A673 (cell line): ENCODE measurements at regions of chr11 and their contacts with region 1.

Region 1: GRCh38 chr11:13772223-13773046 is 104.0 kb downstream of the FAR1 start:
- DNase-seq: peak; percentile 67
- H3K4me3 ChIP-seq: no peak overlapping the region
- H3K27ac ChIP-seq: no peak overlapping the region
- H3K4me1 ChIP-seq: no peaks in the 10 kb centered on the region
- H3K27me3 ChIP-seq: peaks cover 13% of the 10 kb centered on the region
- CTCF ChIP-seq: peak; percentile 60

Region 2: DNA sequence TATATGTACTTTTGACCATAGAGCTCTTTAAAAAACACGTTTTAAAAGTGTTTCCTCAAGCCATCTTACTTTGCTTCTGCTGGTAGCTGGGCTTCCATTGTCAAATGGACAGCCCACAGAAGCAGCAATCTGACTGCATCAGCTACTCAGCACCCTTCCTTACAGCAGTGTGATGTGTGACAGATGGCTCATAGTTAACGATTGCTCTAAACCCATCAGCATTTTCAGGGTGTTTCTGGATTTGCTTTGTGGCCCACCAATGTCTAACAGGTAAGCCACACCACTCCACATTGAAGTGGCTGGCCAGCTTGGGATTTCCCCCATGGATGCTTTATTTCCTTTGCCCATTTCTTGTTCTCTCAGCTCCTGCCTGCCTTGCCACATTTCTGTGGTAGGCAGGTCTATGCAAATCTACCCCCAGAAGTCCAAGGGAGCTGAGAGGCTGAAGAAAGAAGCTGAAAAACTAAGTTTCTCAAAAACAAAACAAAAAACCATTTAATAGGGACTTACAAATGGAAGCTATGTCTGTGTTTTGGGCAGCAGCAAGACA is 111.3 kb before region 1 on chr11:
- CTCF ChIA-PET with region 1: no interaction called
- POLR2A ChIA-PET with region 1: no interaction called
- intact Hi-C with region 1: no loop called
- DNase-seq: no peak
- H3K4me3 ChIP-seq: no peak overlapping the region
- H3K27ac ChIP-seq: no peak overlapping the region
- H3K4me1 ChIP-seq: no peaks in the 10 kb centered on the region
- H3K27me3 ChIP-seq: no peaks in the 10 kb centered on the region
- CTCF ChIP-seq: no peak

Region 3: GRCh38 chr11:13949876-13950275 is 177.4 kb after region 1 on chr11:
- CTCF ChIA-PET with region 1: no interaction called
- POLR2A ChIA-PET with region 1: no interaction called
- intact Hi-C with region 1: loop called (anchors 5 kb)
- DNase-seq: no peak
- H3K4me3 ChIP-seq: no peak overlapping the region
- H3K27ac ChIP-seq: no peak overlapping the region
- H3K4me1 ChIP-seq: no peaks in the 10 kb centered on the region
- H3K27me3 ChIP-seq: peaks cover 12% of the 10 kb centered on the region
- CTCF ChIP-seq: no peak

Region 4: DNA sequence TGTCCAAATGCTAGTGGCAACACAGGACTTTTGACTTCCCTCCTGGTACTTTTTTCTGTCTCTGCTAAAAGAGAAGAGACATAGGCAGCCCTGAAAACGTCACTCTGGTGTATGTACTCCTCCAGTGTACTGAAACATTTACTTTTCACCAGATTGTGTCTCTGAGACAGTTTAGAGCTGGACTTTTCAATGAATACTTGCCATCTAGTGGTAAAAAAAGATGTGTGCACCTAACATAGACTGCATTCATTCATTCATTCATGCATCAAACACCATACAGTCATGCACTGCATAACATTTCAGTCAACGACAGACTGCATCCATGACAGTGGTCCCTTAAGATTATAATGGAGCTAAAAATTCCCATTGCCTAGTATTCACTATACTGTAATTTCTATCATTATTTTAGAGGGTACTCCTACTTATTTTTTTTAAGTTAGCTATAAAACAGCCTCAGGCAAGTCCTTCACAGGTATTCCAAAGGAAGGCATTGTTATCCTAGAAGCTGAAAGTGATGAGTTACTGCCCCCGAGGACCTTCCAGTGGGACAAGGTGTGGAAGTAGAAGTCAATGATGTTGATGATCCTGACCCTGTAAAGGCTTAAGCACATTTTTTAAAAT is 376.3 kb after region 1 on chr11:
- CTCF ChIA-PET with region 1: no interaction called
- POLR2A ChIA-PET with region 1: no interaction called
- intact Hi-C with region 1: loop called (anchors 2 kb)
- DNase-seq: peak; percentile 25
- H3K4me3 ChIP-seq: no peak overlapping the region
- H3K27ac ChIP-seq: no peak overlapping the region
- H3K4me1 ChIP-seq: no peaks in the 10 kb centered on the region
- H3K27me3 ChIP-seq: peaks cover 12% of the 10 kb centered on the region
- CTCF ChIP-seq: peak; percentile 56; the same call in 1 of the 2 replicates

Region 5: GRCh38 chr11:14249121-14249963 is 476.9 kb after region 1 on chr11:
- CTCF ChIA-PET with region 1: no interaction called
- POLR2A ChIA-PET with region 1: no interaction called
- intact Hi-C with region 1: loop called (anchors 1 kb)
- DNase-seq: peak; percentile 71
- H3K4me3 ChIP-seq: no peak overlapping the region
- H3K27ac ChIP-seq: no peak overlapping the region
- H3K4me1 ChIP-seq: no peaks in the 10 kb centered on the region
- H3K27me3 ChIP-seq: peaks cover 7% of the 10 kb centered on the region
- CTCF ChIP-seq: peak; percentile 80